PC-3 (cell line): ENCODE measurements at regions of chr1 and their contacts with region 1.

Region 1: GRCh38 chr1:37323486-37324377 is 150.6 kb upstream of the ZC3H12A start:
- DNase-seq: peak; percentile 67
- ATAC-seq: peak; percentile 40; the same call in 1 of the 2 replicates
- H3K4me3 ChIP-seq: no peak overlapping the region
- H3K27ac ChIP-seq: no peak overlapping the region
- H3K4me1 ChIP-seq: no peaks in the 10 kb centered on the region
- H3K27me3 ChIP-seq: peaks cover 52% of the 10 kb centered on the region
- CTCF ChIP-seq: peak; percentile 82

Region 2: GRCh38 chr1:36576118-36576517 is 747.6 kb before region 1 on chr1:
- CTCF ChIA-PET with region 1: no interaction called
- POLR2A ChIA-PET with region 1: no interaction called
- intact Hi-C with region 1: loop called (anchors 2 kb)
- DNase-seq: peak; percentile 66
- ATAC-seq: peak; percentile 94
- H3K4me3 ChIP-seq: no peak overlapping the region
- H3K27ac ChIP-seq: no peak overlapping the region
- H3K4me1 ChIP-seq: no peaks in the 10 kb centered on the region
- H3K27me3 ChIP-seq: peaks cover 31% of the 10 kb centered on the region
- CTCF ChIP-seq: peak; percentile 75

Region 3: DNA sequence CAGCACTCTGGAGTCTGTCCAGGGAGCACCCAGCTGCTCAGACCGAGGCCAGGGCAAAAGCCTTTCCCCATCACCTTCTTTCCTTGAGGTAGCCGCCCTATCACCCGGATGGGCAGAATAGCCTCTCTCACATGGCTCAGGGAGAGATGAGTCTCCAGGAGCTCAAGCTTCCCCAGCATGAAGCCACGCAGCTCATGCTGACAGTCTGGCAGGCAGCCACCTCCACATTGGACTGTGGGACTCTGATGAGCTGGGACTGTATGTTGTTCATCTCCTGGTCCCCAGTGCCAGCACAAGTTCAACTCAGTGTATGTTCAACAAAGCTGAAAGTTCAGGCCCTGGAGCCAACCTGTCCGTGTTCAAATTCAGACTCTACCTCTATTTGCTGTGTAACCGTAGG is 75.5 kb after region 1 on chr1:
- CTCF ChIA-PET with region 1: no interaction called
- POLR2A ChIA-PET with region 1: no interaction called
- intact Hi-C with region 1: no loop called
- DNase-seq: no peak
- ATAC-seq: no peak
- H3K4me3 ChIP-seq: no peak overlapping the region
- H3K27ac ChIP-seq: no peak overlapping the region
- H3K4me1 ChIP-seq: no peaks in the 10 kb centered on the region
- H3K27me3 ChIP-seq: peaks cover 85% of the 10 kb centered on the region
- CTCF ChIP-seq: no peak